Activated CD4-positive, alpha-beta memory T cell treated with anti-CD3 and anti-CD28 coated beads for 36 hours (primary cell): ENCODE measurements at regions of chr11 and their contacts with region 1.

Region 1: DNA sequence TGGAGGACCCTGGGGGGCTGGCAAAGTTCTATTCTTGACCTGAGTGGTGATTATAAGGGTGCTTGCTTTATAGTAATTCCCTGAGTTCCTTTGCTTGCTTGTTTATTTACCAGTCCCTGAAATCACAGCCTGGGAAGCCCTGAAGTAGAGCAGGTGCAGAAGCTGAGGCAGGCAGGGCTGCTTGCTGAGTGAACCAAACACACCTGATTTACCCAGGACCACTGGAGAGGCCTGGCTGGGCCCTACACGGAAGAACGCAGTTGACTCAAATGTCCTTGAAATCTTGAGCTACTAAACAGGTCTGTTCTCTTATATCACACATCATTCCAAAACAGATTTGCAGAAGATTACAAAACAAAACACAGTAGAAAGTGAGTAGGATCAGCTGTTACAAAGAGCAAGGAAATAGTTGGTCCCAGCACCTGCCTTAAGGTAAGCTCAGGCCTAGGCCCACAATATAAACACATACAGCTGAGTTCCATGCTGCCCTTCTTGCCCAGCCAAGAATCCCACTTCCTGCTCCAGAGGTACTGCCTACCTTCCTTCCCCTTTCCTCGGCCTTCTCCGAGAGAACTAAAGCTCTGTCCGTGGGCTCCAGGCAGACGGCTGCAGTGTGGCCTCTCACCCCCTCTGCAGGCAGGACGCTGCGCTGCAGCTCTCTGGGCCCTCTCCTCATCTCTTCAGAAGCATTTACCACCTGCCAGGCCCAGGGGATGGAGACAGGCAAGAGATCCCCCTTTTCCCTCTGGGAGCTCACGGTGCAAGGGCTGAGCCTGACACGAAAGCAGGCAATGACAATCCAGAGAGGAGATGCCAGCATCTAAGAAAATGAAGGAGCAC is 46.1 kb upstream of the SCUBE2 start:
- DNase-seq: peak; percentile 83
- H3K4me3 Mint-ChIP-seq: no peak overlapping the region
- H3K27ac Mint-ChIP-seq: peak overlapping the region; percentile 10
- H3K4me1 Mint-ChIP-seq: peaks cover 32% of the 10 kb centered on the region
- H3K27me3 Mint-ChIP-seq: no peaks in the 10 kb centered on the region

Region 2: DNA sequence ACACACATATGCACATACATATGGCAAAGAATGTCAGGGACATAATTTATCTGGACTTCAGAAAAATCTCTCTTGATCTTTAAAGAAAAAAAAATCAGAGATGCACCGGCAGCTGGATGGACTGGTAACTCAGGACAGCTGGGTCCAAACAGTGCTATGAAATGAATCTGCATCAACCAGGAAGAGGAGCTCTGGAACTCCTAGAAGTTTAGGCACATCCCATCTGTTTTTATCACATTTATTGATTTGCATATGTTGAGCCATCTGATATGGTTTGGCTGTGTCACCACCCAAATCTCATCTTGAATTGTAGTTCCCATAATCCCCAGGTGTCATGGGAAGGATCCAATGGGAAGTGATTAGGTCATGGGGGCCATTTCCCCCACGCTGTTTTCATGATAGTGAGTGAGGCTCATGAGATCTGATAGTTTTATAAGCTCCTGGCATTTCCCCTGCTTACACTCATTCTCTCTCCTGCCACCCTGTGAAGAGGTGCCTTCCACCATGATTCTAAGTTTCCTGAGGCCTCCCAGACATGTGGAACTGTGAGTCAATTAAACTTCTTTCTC is 314.3 kb before region 1 on chr11:
- CTCF ChIA-PET with region 1: no interaction called
- POLR2A ChIA-PET with region 1: no interaction called
- intact Hi-C with region 1: no loop called
- DNase-seq: no peak
- H3K4me3 Mint-ChIP-seq: no peak overlapping the region
- H3K27ac Mint-ChIP-seq: no peak overlapping the region
- H3K4me1 Mint-ChIP-seq: no peaks in the 10 kb centered on the region
- H3K27me3 Mint-ChIP-seq: no peaks in the 10 kb centered on the region

Region 3: GRCh38 chr11:8964324-8965320 is 172.9 kb before region 1 on chr11 and contains the start of gene TMEM9B:
- CTCF ChIA-PET with region 1: interaction called, 30 read pairs
- POLR2A ChIA-PET with region 1: no interaction called
- intact Hi-C with region 1: loop called (anchors 2 kb)
- DNase-seq: peak; percentile 90
- H3K4me3 Mint-ChIP-seq: peak within 1 kb of the TSS; percentile 94
- H3K27ac Mint-ChIP-seq: peak within 1 kb of the TSS; percentile 90
- H3K4me1 Mint-ChIP-seq: peaks cover 32% of the 10 kb centered on the region
- H3K27me3 Mint-ChIP-seq: no peaks in the 10 kb centered on the region
- total RNA-seq, gene TMEM9B: 17.5 to 19.1 TPM

Region 4: GRCh38 chr11:9015677-9016076 is 121.8 kb before region 1 on chr11:
- CTCF ChIA-PET with region 1: interaction called, 235 read pairs
- POLR2A ChIA-PET with region 1: interaction called, 4 read pairs
- intact Hi-C with region 1: loop called (anchors 1 kb)
- DNase-seq: peak; percentile 70
- H3K4me3 Mint-ChIP-seq: no peak overlapping the region
- H3K27ac Mint-ChIP-seq: no peak overlapping the region
- H3K4me1 Mint-ChIP-seq: peaks cover 18% of the 10 kb centered on the region
- H3K27me3 Mint-ChIP-seq: no peaks in the 10 kb centered on the region

Region 5: GRCh38 chr11:9092853-9093778 is 44.4 kb before region 1 on chr11:
- CTCF ChIA-PET with region 1: interaction called, 18 read pairs
- POLR2A ChIA-PET with region 1: no interaction called
- intact Hi-C with region 1: loop called (anchors 5 kb)
- DNase-seq: no peak
- H3K4me3 Mint-ChIP-seq: no peak overlapping the region
- H3K27ac Mint-ChIP-seq: no peak overlapping the region
- H3K4me1 Mint-ChIP-seq: peaks cover 2% of the 10 kb centered on the region
- H3K27me3 Mint-ChIP-seq: peaks cover 52% of the 10 kb centered on the region

Region 6: GRCh38 chr11:9150501-9150900 is 13.0 kb after region 1 on chr11:
- CTCF ChIA-PET with region 1: interaction called, 22 read pairs
- POLR2A ChIA-PET with region 1: no interaction called
- intact Hi-C with region 1: no loop called
- DNase-seq: no peak
- H3K4me3 Mint-ChIP-seq: no peak overlapping the region
- H3K27ac Mint-ChIP-seq: no peak overlapping the region
- H3K4me1 Mint-ChIP-seq: peaks cover 6% of the 10 kb centered on the region
- H3K27me3 Mint-ChIP-seq: no peaks in the 10 kb centered on the region

Region 7: DNA sequence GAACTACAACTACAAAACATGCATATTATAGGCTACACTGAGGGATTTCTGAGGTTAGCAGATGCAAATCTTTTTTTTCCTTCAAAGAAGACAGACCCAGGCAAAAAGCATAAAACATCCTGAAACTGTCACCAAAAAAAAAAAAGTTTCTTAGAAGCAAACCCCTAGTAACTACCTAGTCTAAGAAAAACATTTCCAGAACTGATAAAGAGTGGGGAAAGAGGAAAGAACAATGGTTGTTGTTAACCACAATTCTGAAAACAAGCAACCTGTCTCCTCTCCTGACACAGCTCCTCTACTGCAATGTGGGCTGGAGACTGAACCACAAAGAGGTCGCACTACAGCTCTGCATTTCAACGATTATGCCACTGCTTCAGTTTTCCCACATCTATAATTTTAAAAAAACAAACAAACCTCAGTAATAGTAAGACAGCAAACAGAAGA is 112.6 kb after region 1 on chr11:
- CTCF ChIA-PET with region 1: no interaction called
- POLR2A ChIA-PET with region 1: no interaction called
- intact Hi-C with region 1: no loop called
- DNase-seq: peak; percentile 55
- H3K4me3 Mint-ChIP-seq: peak overlapping the region; percentile 15
- H3K27ac Mint-ChIP-seq: peak overlapping the region; percentile 67
- H3K4me1 Mint-ChIP-seq: peaks cover 51% of the 10 kb centered on the region
- H3K27me3 Mint-ChIP-seq: no peaks in the 10 kb centered on the region

Region 8: GRCh38 chr11:9506489-9507276 is 369.2 kb after region 1 on chr11:
- CTCF ChIA-PET with region 1: interaction called, 25 read pairs
- POLR2A ChIA-PET with region 1: no interaction called
- intact Hi-C with region 1: no loop called
- DNase-seq: peak; percentile 82
- H3K4me3 Mint-ChIP-seq: no peak overlapping the region
- H3K27ac Mint-ChIP-seq: no peak overlapping the region
- H3K4me1 Mint-ChIP-seq: peaks cover 11% of the 10 kb centered on the region
- H3K27me3 Mint-ChIP-seq: no peaks in the 10 kb centered on the region